ENCODE measurements at regions of chr9 and their contacts with region 1.

Region 1: DNA sequence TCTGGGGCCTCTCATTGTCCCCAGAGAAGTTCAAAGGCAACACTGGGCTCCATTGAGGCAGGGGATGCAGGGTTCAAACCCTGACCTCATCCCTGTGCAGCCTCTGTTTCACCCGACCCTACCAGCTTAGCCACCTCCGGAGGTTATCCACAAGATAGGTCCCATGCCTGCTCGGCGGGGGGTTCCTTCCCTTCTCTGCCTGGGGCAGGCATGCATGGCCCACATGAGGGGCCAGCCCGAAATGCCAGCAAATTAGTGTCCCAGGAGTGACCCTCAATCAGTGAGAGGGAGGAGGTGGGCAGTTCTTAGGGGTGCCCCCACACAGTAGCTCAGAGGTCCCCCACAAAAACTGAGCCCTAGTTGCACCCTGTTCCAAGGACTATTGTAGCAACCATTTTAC is 24.8 kb upstream of the FUBP3 start:
- DNase-seq: no peak
- ATAC-seq: no peak
- H3K4me3 ChIP-seq: no peak overlapping the region
- H3K27ac ChIP-seq: no peak overlapping the region
- H3K4me1 ChIP-seq: no peaks in the 10 kb centered on the region
- H3K27me3 ChIP-seq: no peaks in the 10 kb centered on the region
- CTCF ChIP-seq: no peak

Region 2: DNA sequence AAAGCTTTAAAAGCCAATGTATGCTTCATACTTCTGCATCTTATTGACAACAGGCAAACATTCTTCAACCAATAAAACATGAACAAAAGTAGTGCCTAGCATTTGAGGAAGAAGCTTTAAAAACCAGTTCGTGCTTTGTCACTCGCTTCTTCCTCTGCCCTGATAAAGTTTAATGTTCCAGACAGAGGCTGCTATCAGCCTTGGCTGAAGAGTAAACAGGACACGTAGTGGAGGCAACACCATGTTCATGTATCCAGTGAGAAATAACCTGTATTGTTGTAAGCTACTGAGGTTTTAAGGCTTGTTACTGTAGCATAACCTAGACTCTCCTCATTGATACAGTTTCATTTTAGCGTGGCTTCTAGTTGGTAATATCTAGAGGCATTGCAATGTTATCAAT is 21.6 kb after region 1 on chr9:
- CTCF ChIA-PET with region 1: interaction called, 11 read pairs
- POLR2A ChIA-PET with region 1: no interaction called
- in situ Hi-C with region 1: no loop called
- intact Hi-C with region 1: no loop called
- DNase-seq: no peak
- ATAC-seq: no peak
- H3K4me3 ChIP-seq: no peak overlapping the region
- H3K27ac ChIP-seq: no peak overlapping the region
- H3K4me1 ChIP-seq: peaks cover 8% of the 10 kb centered on the region
- H3K27me3 ChIP-seq: no peaks in the 10 kb centered on the region
- CTCF ChIP-seq: no peak